Left ventricle myocardium inferior (tissue), 1 donor: ENCODE measurements at regions of chr2 and their contacts with region 1.

Region 1: GRCh38 chr2:26605195-26605998 is 35.8 kb downstream of the CIB4 start:
- DNase-seq: no peak
- H3K4me3 ChIP-seq: no peak overlapping the region
- H3K27ac ChIP-seq: no peak overlapping the region
- H3K4me1 ChIP-seq: no peaks in the 10 kb centered on the region
- H3K27me3 ChIP-seq: peaks cover 79% of the 10 kb centered on the region
- CTCF ChIP-seq: peak; percentile 85

Region 2: GRCh38 chr2:26745609-26746327 is 140.4 kb after region 1 on chr2:
- intact Hi-C with region 1: loop called (anchors 2 kb)
- DNase-seq: peak; percentile 84
- H3K4me3 ChIP-seq: no peak overlapping the region
- H3K27ac ChIP-seq: no peak overlapping the region
- H3K4me1 ChIP-seq: no peaks in the 10 kb centered on the region
- H3K27me3 ChIP-seq: no peaks in the 10 kb centered on the region
- CTCF ChIP-seq: peak; percentile 96